ENCODE measurements at regions of chr12 and their contacts with region 1.

Region 1: DNA sequence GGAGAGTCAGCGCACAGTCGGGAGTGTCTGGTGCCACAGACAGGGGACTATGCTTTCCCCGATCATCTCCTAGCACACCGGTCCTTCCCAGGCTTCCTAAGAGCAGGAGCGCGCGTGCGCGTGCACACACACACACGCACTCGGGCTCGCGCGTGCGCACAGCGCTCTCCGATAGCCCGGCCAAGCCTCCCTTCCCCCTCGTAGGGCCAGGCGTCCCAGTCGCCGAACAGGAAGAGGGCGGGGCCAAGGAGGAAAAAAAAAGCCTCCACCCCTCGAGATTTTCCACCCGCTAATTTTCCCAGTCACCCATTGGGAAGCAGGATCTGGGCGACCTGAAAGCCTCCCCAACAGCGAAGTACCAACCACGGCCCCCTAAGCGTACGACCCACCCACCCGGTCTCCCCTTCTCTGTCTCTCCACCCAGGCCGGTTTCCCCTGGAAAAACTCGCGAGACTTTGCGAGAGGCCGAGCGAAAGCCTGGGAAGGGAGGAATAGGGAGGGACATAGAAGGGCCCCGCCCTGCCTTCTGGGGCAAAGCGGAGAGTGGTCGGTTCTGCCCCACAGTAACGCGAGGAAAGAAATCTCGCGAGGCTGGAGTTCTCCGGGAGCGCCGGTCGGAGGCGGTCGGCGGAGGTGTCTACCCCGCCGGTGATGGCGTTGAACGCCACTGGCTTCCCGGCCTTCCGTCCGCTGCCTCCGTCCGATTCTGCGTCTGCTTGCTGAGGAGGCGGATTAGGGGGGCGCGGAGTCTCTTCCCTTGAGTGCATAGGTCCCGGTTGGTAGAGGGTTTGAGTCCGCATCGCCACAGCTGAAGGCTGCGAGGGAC is at the starts of genes FGFR1OP2 and INTS13:
- DNase-seq: peak; percentile 89 to 98 (median 94)
- ATAC-seq: peak; percentile 91
- H3K4me3 ChIP-seq: peak within 1 kb of the TSS; percentile 71
- H3K4me3 Mint-ChIP-seq: peak within 1 kb of the TSS; percentile 90
- H3K27ac ChIP-seq: peak within 1 kb of the TSS; percentile 94 to 95
- H3K27ac Mint-ChIP-seq: peak within 1 kb of the TSS; percentile 86
- H3K4me1 ChIP-seq: peaks cover 22% of the 10 kb centered on the region
- H3K4me1 Mint-ChIP-seq: peaks cover 80% of the 10 kb centered on the region
- H3K27me3 ChIP-seq: no peaks in the 10 kb centered on the region
- H3K27me3 Mint-ChIP-seq: no peaks in the 10 kb centered on the region
- CTCF ChIP-seq: no peak
- total RNA-seq, gene FGFR1OP2: 44.8 to 46.8 TPM
- total RNA-seq, gene INTS13: 8.5 to 12.1 TPM

Region 2: GRCh38 chr12:26627335-26627734 is 310.8 kb before region 1 on chr12:
- CTCF ChIA-PET with region 1: no interaction called
- POLR2A ChIA-PET with region 1: no interaction called
- intact Hi-C with region 1: no loop called
- DNase-seq: no peak
- ATAC-seq: no peak
- H3K4me3 ChIP-seq: no peak overlapping the region
- H3K4me3 Mint-ChIP-seq: no peak overlapping the region
- H3K27ac ChIP-seq: no peak overlapping the region
- H3K27ac Mint-ChIP-seq: no peak overlapping the region
- H3K4me1 ChIP-seq: no peaks in the 10 kb centered on the region
- H3K4me1 Mint-ChIP-seq: no peaks in the 10 kb centered on the region
- H3K27me3 ChIP-seq: no peaks in the 10 kb centered on the region
- H3K27me3 Mint-ChIP-seq: no peaks in the 10 kb centered on the region
- CTCF ChIP-seq: no peak

Region 3: GRCh38 chr12:26971963-26972362 is 33.9 kb after region 1 on chr12:
- CTCF ChIA-PET with region 1: interaction called, 3 read pairs
- POLR2A ChIA-PET with region 1: interaction called, 5 read pairs
- intact Hi-C with region 1: loop called in 1 of 2 experiments (anchors 5 kb)
- DNase-seq: peak; percentile 6 to 88 (median 40)
- ATAC-seq: peak; percentile 99
- H3K4me3 ChIP-seq: no peak overlapping the region
- H3K4me3 Mint-ChIP-seq: no peak overlapping the region
- H3K27ac ChIP-seq: peak overlapping the region in 1 of 2 donors; percentile 2
- H3K27ac Mint-ChIP-seq: peak overlapping the region; percentile 55
- H3K4me1 ChIP-seq: peaks cover 4% of the 10 kb centered on the region
- H3K4me1 Mint-ChIP-seq: peaks cover 23% of the 10 kb centered on the region
- H3K27me3 ChIP-seq: no peaks in the 10 kb centered on the region
- H3K27me3 Mint-ChIP-seq: no peaks in the 10 kb centered on the region
- CTCF ChIP-seq: no peak

Region 4: DNA sequence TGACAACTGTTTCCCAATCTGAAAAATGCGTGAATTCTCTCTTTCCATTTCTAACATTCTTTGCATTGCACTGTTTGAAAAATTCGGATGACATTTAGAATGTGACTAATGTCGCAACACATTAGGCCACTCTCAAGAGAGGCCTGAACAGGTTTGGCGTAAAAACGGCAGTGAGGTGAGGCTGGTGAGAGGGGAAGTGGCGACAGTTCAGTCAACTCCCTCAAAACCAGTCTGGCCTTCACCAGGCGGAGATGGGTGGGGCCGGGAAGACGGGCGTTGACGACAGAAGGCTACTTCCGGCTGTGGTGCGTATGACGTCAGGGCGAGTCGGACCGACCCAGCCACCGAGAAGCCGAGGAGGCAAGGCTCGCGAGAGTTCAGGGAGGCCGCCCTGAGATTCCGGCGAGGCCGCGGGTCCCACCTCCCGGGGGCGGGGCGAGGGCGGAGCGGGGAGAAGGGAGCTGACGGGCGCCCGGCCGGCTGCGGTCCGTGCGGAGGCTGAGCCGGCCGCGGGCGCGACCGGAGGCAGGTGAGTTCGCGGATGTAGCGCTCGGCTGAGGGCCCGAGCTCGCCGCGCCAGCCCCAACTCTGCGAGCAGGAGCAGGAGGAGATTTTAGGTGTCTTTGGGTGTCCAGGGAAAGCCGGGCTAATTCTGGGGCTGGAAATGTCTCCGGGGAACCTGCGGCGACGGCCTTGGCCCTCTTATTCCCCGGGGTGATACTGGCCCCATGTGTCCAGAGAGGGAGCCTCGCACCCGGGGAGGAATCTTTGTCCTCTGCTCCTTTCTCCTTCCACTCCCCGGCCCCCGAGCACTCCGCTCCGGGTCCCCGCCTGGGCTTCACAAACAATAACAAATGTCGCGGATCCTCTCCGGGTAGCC is 306.0 kb after region 1 on chr12 and contains the start of gene STK38L:
- CTCF ChIA-PET with region 1: no interaction called
- POLR2A ChIA-PET with region 1: interaction called, 3 read pairs
- intact Hi-C with region 1: loop called in 1 of 2 experiments (anchors 2 kb)
- DNase-seq: peak; percentile 87 to 99 (median 94)
- ATAC-seq: peak; percentile 95
- H3K4me3 ChIP-seq: peak within 1 kb of the TSS; percentile 93
- H3K4me3 Mint-ChIP-seq: peak within 1 kb of the TSS; percentile 99
- H3K27ac ChIP-seq: peak within 1 kb of the TSS; percentile 60 to 77
- H3K27ac Mint-ChIP-seq: peak within 1 kb of the TSS; percentile 92
- H3K4me1 ChIP-seq: peaks cover 15% of the 10 kb centered on the region
- H3K4me1 Mint-ChIP-seq: peaks cover 64% of the 10 kb centered on the region
- H3K27me3 ChIP-seq: no peaks in the 10 kb centered on the region
- H3K27me3 Mint-ChIP-seq: no peaks in the 10 kb centered on the region
- CTCF ChIP-seq: no peak
- total RNA-seq, gene STK38L: 18.3 to 21.0 TPM

Region 5: GRCh38 chr12:27710592-27711316 is 772.7 kb after region 1 on chr12 and contains the start of gene MRPS35:
- CTCF ChIA-PET with region 1: no interaction called
- POLR2A ChIA-PET with region 1: no interaction called
- intact Hi-C with region 1: loop called in 1 of 2 experiments (anchors 5 kb)
- DNase-seq: peak; percentile 83 to 95 (median 88)
- ATAC-seq: peak; percentile 96
- H3K4me3 ChIP-seq: peak within 1 kb of the TSS; percentile 71
- H3K4me3 Mint-ChIP-seq: peak within 1 kb of the TSS; percentile 98
- H3K27ac ChIP-seq: peak within 1 kb of the TSS; percentile 60 to 69
- H3K27ac Mint-ChIP-seq: peak within 1 kb of the TSS; percentile 96
- H3K4me1 ChIP-seq: peaks cover 25% of the 10 kb centered on the region
- H3K4me1 Mint-ChIP-seq: peaks cover 41% of the 10 kb centered on the region
- H3K27me3 ChIP-seq: no peaks in the 10 kb centered on the region
- H3K27me3 Mint-ChIP-seq: no peaks in the 10 kb centered on the region
- CTCF ChIP-seq: no peak
- total RNA-seq, gene MRPS35: 22.1 to 23.9 TPM

Measured in CD4-positive, alpha-beta T cell (primary cell).